GM12878 (cell line): ENCODE measurements at regions of chr7 and their contacts with region 1.

Region 1: DNA sequence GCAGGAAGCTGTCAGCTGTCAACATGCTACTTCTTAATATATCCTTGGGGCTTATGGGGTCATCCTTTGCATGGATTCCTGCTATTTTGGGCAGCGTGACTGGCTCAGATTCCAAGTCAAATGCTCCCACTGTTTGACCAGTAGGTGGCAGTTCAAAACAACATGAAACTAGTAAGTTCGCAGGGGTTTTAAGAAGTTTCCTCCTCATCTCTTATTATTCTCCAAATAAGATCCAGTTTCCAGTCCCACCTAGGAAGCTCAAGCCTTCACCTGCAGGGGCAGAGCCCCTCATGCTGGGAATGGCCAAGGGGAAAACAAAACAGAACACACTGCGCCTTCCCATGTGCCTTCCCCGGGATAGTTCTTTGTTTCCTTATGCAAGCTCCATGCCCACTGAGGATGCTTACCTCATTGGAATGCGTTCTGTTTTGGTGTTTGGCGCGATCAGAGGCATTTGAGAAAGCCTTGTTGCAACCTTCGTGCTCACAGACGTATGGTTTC is 259.8 kb downstream of the GLI3 start:
- DNase-seq: no peak
- ATAC-seq: 0 out of 3 replicates have a peak, but pooled peaks have one; percentile 31
- H3K4me3 ChIP-seq: no peak overlapping the region
- H3K27ac ChIP-seq: no peak overlapping the region
- H3K4me1 ChIP-seq: no peaks in the 10 kb centered on the region
- H3K27me3 ChIP-seq: no peaks in the 10 kb centered on the region; a peak in 1 of 4 replicates
- CTCF ChIP-seq: peak; percentile 49 to 59 (median 58); a peak in 5 of 6 replicates
- EP300 ChIP-seq: no peak
- POLR2A ChIP-seq: no peak
- RAD21 ChIP-seq: peak; percentile 54

Region 2: DNA sequence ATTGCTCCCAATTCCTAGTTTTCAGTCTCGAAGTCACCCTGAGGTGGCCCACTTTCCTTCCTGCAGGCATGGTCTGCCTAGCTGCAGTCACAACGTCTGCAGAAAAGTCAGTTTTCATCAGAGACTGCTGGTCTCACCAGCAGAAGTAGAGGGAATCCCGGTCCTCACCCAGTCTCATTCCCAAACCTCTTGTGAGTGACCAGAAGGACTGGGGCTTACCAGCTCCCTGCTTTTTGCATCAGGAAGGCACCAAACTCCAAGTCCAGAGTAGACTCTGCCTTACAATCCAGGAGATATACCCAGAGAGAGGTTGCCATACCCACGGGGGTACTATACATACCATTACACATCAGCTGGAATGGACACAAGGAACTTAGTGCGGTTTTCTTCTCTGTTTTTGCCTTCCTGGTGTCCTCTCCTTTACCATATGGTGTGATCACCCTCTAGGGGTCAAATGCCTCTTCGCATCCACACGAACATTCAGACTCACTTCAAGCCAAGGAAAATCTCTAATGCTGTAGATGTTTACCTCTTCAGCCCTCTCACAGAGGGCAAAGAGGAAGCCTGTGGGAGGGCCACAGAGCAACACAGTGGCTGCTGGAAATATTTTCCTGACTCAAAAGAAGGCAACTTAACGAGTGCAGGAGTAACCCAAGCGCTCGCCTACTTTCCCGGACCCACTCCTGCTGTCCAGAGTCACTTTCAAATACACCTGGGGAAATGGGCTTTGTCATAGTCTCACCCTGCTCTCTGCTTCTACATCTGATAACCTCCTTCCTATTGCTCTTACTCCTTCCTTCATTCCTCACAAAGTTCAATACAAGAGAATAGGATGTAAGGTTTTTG is 713.8 kb after region 1 on chr7:
- CTCF ChIA-PET with region 1: interaction called, 6 read pairs
- POLR2A ChIA-PET with region 1: no interaction called
- RAD21 ChIA-PET with region 1: no interaction called
- SMC1A ChIA-PET with region 1: no interaction called
- in situ Hi-C with region 1: no loop called
- intact Hi-C with region 1: loop called (anchors 2 kb)
- DNase-seq: no peak
- ATAC-seq: peak; percentile 39; the same call in 1 of the 3 replicates
- H3K4me3 ChIP-seq: no peak overlapping the region
- H3K27ac ChIP-seq: no peak overlapping the region
- H3K4me1 ChIP-seq: no peaks in the 10 kb centered on the region
- H3K27me3 ChIP-seq: no peaks in the 10 kb centered on the region
- CTCF ChIP-seq: peak in 2 of 3 experiments; percentile 24 to 28; a peak in 3 of 6 replicates
- EP300 ChIP-seq: no peak
- POLR2A ChIP-seq: no peak
- RAD21 ChIP-seq: peak; percentile 46

Region 3: GRCh38 chr7:42843205-42843800 is 866.1 kb after region 1 on chr7:
- CTCF ChIA-PET with region 1: interaction called, 41 read pairs
- POLR2A ChIA-PET with region 1: no interaction called
- RAD21 ChIA-PET with region 1: interaction called, 12 read pairs
- SMC1A ChIA-PET with region 1: interaction called, 20 read pairs
- in situ Hi-C with region 1: loop called (anchors 10 kb)
- intact Hi-C with region 1: loop called (anchors 5 kb)
- DNase-seq: no peak
- ATAC-seq: peak; percentile 94
- H3K4me3 ChIP-seq: no peak overlapping the region
- H3K27ac ChIP-seq: no peak overlapping the region
- H3K4me1 ChIP-seq: no peaks in the 10 kb centered on the region
- H3K27me3 ChIP-seq: peaks cover 0 to 2% of the 10 kb centered on the region in 2 experiments; a peak in 2 of 4 replicates
- CTCF ChIP-seq: peak; percentile 40 to 60 (median 50)
- EP300 ChIP-seq: no peak
- POLR2A ChIP-seq: no peak
- RAD21 ChIP-seq: peak; percentile 59

Region 4: GRCh38 chr7:42876182-42877068 is 899.2 kb after region 1 on chr7:
- CTCF ChIA-PET with region 1: interaction called, 22 read pairs
- POLR2A ChIA-PET with region 1: no interaction called
- RAD21 ChIA-PET with region 1: interaction called, 5 read pairs
- SMC1A ChIA-PET with region 1: interaction called, 9 read pairs
- in situ Hi-C with region 1: no loop called
- intact Hi-C with region 1: no loop called
- DNase-seq: no peak
- ATAC-seq: peak; percentile 93
- H3K4me3 ChIP-seq: no peak overlapping the region
- H3K27ac ChIP-seq: no peak overlapping the region
- H3K4me1 ChIP-seq: no peaks in the 10 kb centered on the region
- H3K27me3 ChIP-seq: no peaks in the 10 kb centered on the region
- CTCF ChIP-seq: peak; percentile 76 to 86 (median 81)
- EP300 ChIP-seq: no peak
- POLR2A ChIP-seq: no peak
- RAD21 ChIP-seq: peak; percentile 70